CD8-positive, alpha-beta T cell (primary cell): ENCODE measurements at regions of chr1 and their contacts with region 1.

Region 1: GRCh38 chr1:113140588-113141446 is 67.8 kb downstream of the LRIG2 start:
- DNase-seq: peak; percentile 2 to 67 (median 43)
- ATAC-seq: peak; percentile 73
- H3K4me3 ChIP-seq: no peak overlapping the region
- H3K4me3 Mint-ChIP-seq: no peak overlapping the region
- H3K27ac ChIP-seq: no peak overlapping the region
- H3K27ac Mint-ChIP-seq: no peak overlapping the region
- H3K4me1 ChIP-seq: no peaks in the 10 kb centered on the region
- H3K4me1 Mint-ChIP-seq: peaks cover 8% of the 10 kb centered on the region
- H3K27me3 ChIP-seq: no peaks in the 10 kb centered on the region
- H3K27me3 Mint-ChIP-seq: no peaks in the 10 kb centered on the region
- CTCF ChIP-seq: peak; percentile 70

Region 2: GRCh38 chr1:113170519-113170918 is 29.7 kb after region 1 on chr1:
- CTCF ChIA-PET with region 1: interaction called, 3 read pairs
- POLR2A ChIA-PET with region 1: no interaction called
- intact Hi-C with region 1: loop called in 1 of 2 experiments (anchors 2 kb)
- DNase-seq: no peak
- ATAC-seq: no peak
- H3K4me3 ChIP-seq: no peak overlapping the region
- H3K4me3 Mint-ChIP-seq: no peak overlapping the region
- H3K27ac ChIP-seq: no peak overlapping the region
- H3K27ac Mint-ChIP-seq: no peak overlapping the region
- H3K4me1 ChIP-seq: no peaks in the 10 kb centered on the region
- H3K4me1 Mint-ChIP-seq: no peaks in the 10 kb centered on the region
- H3K27me3 ChIP-seq: no peaks in the 10 kb centered on the region
- H3K27me3 Mint-ChIP-seq: peaks cover 13% of the 10 kb centered on the region
- CTCF ChIP-seq: no peak

Region 3: DNA sequence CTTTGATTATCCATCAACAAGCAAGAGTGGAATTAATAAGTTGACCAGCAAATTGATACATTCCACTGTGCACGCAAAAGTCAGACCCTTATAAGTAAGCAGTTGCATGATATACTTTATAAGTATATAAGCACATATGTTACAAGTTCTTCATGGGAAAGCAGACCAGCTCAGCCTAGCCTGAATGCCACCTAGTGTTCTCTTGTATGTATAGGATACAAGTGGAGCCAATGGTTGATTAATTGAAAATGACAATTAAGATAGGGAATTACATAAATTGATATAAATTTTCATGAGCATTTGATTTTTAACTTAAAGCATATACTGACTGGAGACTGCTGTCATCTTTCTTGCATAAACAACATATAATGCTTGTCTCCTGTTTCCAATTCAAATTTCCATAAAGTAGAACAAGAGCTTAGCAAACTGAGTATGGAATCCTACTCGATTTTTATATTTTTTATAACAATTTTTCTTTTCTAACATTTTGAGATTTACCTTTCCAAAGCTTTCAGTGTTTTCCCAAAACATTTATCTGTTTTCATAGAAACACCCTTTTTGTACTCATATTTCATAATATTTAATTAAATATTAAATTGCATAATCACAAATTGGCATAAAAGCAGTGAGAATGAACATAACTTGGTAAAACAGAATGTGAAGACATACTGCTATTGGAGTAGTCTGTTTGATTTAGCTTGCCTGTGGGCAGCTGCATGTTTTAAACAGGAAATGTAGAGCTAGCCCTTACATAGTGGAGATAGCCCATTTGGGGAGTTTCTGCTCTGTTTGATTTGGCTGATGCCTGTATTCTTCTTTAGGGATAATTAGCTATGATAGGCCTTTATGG is 312.3 kb after region 1 on chr1:
- CTCF ChIA-PET with region 1: interaction called, 12 read pairs
- POLR2A ChIA-PET with region 1: no interaction called
- intact Hi-C with region 1: loop called in 1 of 2 experiments (anchors 5 kb)
- DNase-seq: peak in 3 of 9 experiments; percentile 6 to 40 (median 26)
- ATAC-seq: no peak
- H3K4me3 ChIP-seq: no peak overlapping the region
- H3K4me3 Mint-ChIP-seq: no peak overlapping the region
- H3K27ac ChIP-seq: no peak overlapping the region
- H3K27ac Mint-ChIP-seq: no peak overlapping the region
- H3K4me1 ChIP-seq: no peaks in the 10 kb centered on the region
- H3K4me1 Mint-ChIP-seq: no peaks in the 10 kb centered on the region
- H3K27me3 ChIP-seq: no peaks in the 10 kb centered on the region
- H3K27me3 Mint-ChIP-seq: peaks cover 21% of the 10 kb centered on the region
- CTCF ChIP-seq: no peak